Activated T-helper 2 cell treated with anti-CD3 and anti-CD28 coated beads, Interferon-gamma antibody, Interleukin-2, Interleukin-4, amounts not matched to agents 10 μg/mL and 5 μg/mL and 100 μg/mL, durations not matched to agents 14 hours and 24 hours and 36 hours (primary cell): ENCODE measurements at regions of chr2 and their contacts with region 1.

Region 1: DNA sequence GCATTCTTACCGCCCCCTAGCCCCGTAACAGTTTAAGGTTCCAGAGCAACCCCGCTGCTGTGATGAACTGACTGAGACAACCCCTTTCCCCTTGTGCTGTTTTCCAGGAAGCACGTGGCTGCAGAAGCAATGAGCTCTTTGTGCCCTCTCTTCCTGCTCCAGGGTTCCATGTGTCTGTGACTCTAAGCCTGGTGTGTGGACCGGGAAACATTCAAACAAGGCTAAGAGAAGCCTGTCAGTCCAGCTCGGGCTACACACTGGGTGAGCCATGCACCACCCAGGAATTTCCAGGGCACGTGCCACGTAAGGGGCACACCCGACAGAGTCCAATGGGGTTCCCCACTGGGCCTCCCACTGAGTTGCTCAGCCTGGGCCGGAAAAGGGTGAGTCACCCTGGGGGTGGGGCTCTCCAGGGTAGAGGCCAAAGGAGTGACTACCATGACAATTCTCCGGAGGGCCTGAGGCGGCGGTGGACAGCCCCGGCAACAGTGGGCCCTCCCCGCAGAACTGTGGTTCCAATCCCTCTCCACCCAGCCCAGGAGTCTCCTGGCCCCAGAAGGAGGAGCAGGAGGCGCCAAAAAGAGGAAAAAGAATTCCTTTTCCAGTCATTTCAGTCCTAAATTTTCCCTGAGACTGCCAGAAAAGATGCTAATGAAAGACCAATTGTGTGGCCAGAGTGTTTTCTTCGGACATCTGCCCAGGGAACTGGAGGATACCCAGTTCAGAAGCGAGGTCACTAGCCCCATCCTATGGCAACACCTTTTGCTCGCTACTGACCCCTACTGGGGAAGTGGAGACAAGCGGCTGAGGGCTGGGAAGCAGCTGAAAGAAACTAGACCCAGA is 157.8 kb upstream of the SLC1A4 start:
- DNase-seq: peak; percentile 69
- H3K4me3 Mint-ChIP-seq: peak overlapping the region; percentile 15
- H3K27ac Mint-ChIP-seq: peak overlapping the region; percentile 81
- H3K4me1 Mint-ChIP-seq: peaks cover 24% of the 10 kb centered on the region
- H3K27me3 Mint-ChIP-seq: peaks cover 8% of the 10 kb centered on the region

Region 2: DNA sequence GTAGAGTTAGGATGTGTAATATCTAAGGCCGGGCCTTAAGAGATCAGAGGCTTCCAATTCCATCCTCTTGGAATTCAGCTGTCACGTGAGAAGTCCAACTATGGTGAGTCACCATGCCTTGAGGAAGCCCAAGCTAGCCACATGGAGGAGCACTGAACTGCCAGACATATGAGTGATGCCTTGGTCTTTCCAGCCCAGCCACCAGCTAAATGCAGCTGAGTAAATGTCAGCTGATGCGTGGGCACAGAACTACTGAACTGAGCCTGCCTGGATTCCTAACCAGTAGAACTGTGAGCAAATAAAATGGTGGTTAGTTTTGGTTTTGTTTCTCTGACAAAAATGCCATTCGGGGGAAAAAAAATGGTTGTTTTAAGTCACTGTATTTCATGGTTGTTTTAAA is 23.9 kb before region 1 on chr2:
- intact Hi-C with region 1: loop called (anchors 2 kb)
- DNase-seq: no peak
- H3K4me3 Mint-ChIP-seq: no peak overlapping the region
- H3K27ac Mint-ChIP-seq: peak overlapping the region; percentile 61
- H3K4me1 Mint-ChIP-seq: peaks cover 35% of the 10 kb centered on the region
- H3K27me3 Mint-ChIP-seq: no peaks in the 10 kb centered on the region

Region 3: DNA sequence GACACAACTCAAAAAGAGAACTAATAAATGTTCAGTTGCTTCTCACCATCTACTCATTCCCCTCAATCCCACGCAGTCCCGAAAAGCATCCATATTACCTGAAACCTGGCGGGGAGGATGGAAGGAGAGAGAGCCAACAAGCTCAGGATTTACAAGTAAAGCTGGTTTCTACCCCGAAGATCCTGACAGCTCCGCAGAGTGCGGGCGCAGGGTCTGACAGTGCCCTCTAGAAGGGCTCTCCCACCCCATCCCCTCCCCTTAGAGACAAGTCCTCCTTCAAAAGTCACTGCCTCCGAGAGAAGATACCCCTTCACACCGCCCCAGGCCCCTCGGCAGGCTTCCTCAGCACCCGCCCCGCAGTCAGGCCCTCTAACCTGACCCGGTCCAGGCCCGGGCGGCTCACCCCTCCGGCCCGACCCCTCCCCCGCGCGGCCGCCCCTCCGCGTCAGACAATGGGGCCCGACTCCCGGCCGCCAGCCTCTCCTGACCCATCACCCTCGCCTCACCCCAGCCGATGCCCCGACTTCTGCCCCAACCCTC is 298.0 kb after region 1 on chr2:
- intact Hi-C with region 1: no loop called
- DNase-seq: no peak
- H3K4me3 Mint-ChIP-seq: peak overlapping the region; percentile 100
- H3K27ac Mint-ChIP-seq: peak overlapping the region; percentile 100
- H3K4me1 Mint-ChIP-seq: peaks cover 41% of the 10 kb centered on the region
- H3K27me3 Mint-ChIP-seq: peaks cover 3% of the 10 kb centered on the region